ENCODE measurements at regions of chr17 and their contacts with region 1.

Region 1: DNA sequence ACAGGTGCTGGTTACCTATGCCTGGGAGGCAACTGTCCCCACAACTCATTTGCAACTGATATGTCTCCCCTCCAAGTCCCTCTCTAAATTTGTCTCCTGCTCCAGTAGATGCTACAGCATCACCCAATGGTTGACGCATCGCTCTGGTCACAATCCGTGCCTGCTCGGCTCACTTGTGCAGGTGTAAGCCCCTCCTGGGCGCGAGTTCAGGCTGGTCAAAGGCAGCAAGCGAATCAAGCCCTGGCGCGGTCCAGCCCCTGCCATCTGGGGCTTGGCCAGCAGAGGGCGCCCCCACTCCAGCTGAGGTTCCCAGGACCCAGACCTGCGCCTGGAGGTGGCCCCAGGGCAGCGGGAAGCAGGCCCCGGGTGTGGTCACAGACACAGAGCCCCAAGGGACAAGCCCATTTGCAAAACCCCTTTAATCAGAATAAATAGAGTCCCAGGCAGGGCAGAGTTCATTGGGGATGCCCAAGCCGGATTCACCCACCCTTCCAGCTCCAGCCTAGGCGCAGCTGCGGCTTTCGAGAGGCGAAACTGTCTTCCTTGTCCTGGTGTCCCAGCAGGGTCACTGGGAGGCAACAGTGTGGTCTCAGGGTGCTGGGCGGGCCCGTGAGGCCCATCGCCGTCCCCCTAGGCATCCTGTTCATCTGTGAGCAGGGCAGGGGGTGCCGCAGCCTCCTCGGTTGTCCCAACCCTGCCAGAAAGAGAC is 15.9 kb downstream of the TMC6 start:
- DNase-seq: peak; percentile 87 to 89
- H3K4me3 ChIP-seq: no peak overlapping the region
- H3K27ac ChIP-seq: peak overlapping the region in 1 of 5 donors; percentile 13
- H3K4me1 ChIP-seq: peaks cover 8 to 42% (median 16%) of the 10 kb centered on the region in 4 donors
- H3K27me3 ChIP-seq: no peaks in the 10 kb centered on the region
- CTCF ChIP-seq: peak in 6 of 7 experiments; percentile 59 to 100 (median 98)
- EP300 ChIP-seq: no peak
- POLR2A ChIP-seq: no peak

Region 2: DNA sequence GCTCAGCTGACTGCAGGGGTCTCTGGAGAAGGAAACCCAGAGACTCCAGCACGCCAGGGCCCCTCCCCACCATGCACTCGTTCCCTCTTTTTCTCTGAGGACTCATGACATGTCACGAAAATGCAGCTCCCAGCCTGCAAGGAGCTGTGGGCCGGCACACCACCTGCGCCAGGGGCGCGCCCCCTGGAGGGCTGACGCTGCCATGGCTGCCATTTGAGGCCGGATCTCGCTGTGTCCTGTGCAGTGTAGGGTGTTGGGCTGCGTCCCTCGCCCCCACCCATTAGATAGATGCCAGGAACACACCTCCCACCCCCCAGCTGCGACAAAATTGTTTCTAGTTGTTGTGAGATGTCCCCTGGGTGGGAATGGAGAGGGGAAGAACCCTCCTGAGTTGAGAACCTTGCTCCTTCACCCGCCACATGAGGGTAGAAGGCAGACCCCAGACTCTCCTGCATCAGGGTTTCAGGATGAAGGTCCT is 63.9 kb after region 1 on chr17:
- intact Hi-C with region 1: loop called (anchors 5 kb)
- DNase-seq: peak; percentile 84 to 90
- H3K4me3 ChIP-seq: no peak overlapping the region
- H3K27ac ChIP-seq: peak overlapping the region in 4 of 5 donors; percentile 9 to 97 (median 90)
- H3K4me1 ChIP-seq: peaks cover 70 to 89% (median 81%) of the 10 kb centered on the region in 4 donors
- H3K27me3 ChIP-seq: no peaks in the 10 kb centered on the region
- CTCF ChIP-seq: peak in 5 of 7 experiments; percentile 58 to 94 (median 85)
- EP300 ChIP-seq: no peak
- POLR2A ChIP-seq: no peak

Region 3: GRCh38 chr17:78197147-78197832 is 84.6 kb after region 1 on chr17:
- intact Hi-C with region 1: no loop called
- DNase-seq: no peak
- H3K4me3 ChIP-seq: no peak overlapping the region
- H3K27ac ChIP-seq: peak overlapping the region in 4 of 5 donors; percentile 85 to 93 (median 87)
- H3K4me1 ChIP-seq: peaks cover 6 to 21% (median 15%) of the 10 kb centered on the region in 4 donors
- H3K27me3 ChIP-seq: no peaks in the 10 kb centered on the region
- CTCF ChIP-seq: no peak
- EP300 ChIP-seq: no peak
- POLR2A ChIP-seq: no peak

Region 4: GRCh38 chr17:78258323-78259191 is 145.9 kb after region 1 on chr17:
- intact Hi-C with region 1: loop called (anchors 5 kb)
- DNase-seq: peak; percentile 63 to 82
- H3K4me3 ChIP-seq: peak overlapping the region in 1 of 4 donors; percentile 16
- H3K27ac ChIP-seq: peak overlapping the region in 4 of 5 donors; percentile 44 to 81 (median 66)
- H3K4me1 ChIP-seq: peaks cover 18 to 56% (median 34%) of the 10 kb centered on the region in 4 donors
- H3K27me3 ChIP-seq: peaks cover 0 to 16% (median 0%) of the 10 kb centered on the region in 3 donors
- CTCF ChIP-seq: no peak
- EP300 ChIP-seq: no peak
- POLR2A ChIP-seq: no peak

Measured in stomach (tissue), 19 donors.